PC-9 (cell line): ENCODE measurements at regions of chr15 and their contacts with region 1.

Region 1: DNA sequence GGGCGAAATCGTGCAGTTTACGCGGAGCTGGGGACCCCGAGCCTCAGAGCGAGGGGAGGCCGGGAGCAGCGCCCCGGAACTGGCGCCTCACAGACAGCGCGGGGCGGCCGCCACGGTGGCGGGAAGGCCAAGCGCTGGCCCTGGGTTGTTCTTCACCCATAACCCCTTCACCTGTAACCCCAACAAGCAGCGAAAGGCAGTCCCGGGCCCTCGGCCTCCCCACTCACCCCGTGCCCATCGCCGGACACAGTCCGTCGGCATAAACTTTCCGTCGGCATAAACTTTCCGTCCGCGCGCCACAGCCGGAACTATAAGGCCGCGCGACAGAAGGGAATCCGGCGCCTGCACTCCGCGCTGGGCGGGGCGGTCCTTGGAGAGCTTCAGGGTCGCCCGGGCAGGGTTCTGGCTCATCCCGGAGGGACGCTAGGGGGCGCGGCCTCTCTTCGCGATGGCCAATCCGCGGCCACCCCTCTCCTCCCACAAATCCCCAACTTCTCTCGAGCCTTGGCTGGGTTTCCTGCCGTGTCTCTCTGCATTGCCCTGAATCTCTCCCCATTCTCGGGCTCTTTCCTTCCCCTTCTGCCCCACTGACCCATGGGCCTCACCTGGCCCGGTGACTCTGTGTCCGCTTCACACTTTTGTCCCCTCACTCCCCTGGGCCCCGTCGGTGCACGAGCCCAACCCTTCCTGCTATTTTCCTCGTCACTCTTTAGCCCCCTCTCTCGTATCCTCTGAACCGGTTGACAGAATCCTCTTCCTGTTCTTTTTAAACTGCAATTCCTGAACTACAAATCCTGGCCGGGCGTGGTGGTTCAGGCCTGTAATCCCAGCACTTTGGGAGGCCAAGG is at the start of gene INTS14:
- DNase-seq: peak; percentile 79 to 97
- H3K4me3 ChIP-seq: peak within 1 kb of the TSS; percentile 88
- H3K27ac ChIP-seq: peak within 1 kb of the TSS; percentile 91
- H3K4me1 ChIP-seq: peaks cover 21% of the 10 kb centered on the region
- H3K27me3 ChIP-seq: no peaks in the 10 kb centered on the region
- CTCF ChIP-seq: peak; percentile 68
- total RNA-seq, gene INTS14: 46.6 and 53.7 TPM in 2 replicates

Region 2: GRCh38 chr15:63640146-63640545 is 1970.9 kb before region 1 on chr15:
- CTCF ChIA-PET with region 1: no interaction called
- POLR2A ChIA-PET with region 1: no interaction called
- intact Hi-C with region 1: no loop called
- DNase-seq: no peak
- H3K4me3 ChIP-seq: no peak overlapping the region
- H3K27ac ChIP-seq: no peak overlapping the region
- H3K4me1 ChIP-seq: no peaks in the 10 kb centered on the region
- H3K27me3 ChIP-seq: no peaks in the 10 kb centered on the region
- CTCF ChIP-seq: no peak

Region 3: DNA sequence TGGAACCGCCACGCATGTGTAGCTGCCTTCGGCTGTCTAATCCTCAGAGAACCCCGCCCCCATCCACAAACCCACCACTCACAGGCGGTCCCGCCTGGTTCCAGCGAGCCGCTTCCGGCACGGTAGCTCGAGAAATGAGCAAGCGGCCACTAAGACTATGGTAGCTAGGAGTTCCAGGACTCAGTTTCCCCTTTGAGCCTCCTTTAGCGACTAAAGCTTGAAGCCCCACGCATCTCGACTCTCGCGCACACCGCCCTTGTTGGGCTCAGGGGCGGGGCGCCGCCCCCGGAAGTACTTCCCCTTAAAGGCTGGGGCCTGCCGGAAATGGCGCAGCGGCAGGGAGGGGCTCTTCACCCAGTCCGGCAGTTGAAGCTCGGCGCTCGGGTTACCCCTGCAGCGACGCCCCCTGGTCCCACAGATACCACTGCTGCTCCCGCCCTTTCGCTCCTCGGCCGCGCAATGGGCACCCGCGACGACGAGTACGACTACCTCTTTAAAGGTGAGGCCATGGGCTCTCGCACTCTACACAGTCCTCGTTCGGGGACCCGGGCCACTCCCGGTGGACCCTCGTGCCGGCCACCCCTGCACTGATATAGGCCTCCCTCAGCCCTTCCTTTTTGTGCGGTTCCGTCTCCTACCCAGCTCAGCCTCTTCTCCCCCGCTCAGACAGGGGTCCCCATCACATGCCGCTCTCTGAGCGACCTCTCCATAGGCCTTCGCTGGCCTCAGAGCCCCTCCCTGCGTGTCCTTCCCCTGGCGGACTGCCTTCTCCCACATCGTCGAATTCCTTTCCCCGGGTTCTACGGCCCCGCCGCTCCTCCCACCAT is 258.2 kb after region 1 on chr15 and contains the start of gene RAB11A:
- CTCF ChIA-PET with region 1: no interaction called
- POLR2A ChIA-PET with region 1: interaction called, 5 read pairs
- intact Hi-C with region 1: loop called (anchors 1 kb)
- DNase-seq: peak; percentile 88 to 94
- H3K4me3 ChIP-seq: peak within 1 kb of the TSS; percentile 96
- H3K27ac ChIP-seq: peak within 1 kb of the TSS; percentile 85
- H3K4me1 ChIP-seq: peaks cover 21% of the 10 kb centered on the region; the same call in 1 of the 2 replicates
- H3K27me3 ChIP-seq: no peaks in the 10 kb centered on the region
- CTCF ChIP-seq: no peak; the same call in 1 of the 2 replicates
- total RNA-seq, gene RAB11A: 186 and 233 TPM in 2 replicates

Region 4: DNA sequence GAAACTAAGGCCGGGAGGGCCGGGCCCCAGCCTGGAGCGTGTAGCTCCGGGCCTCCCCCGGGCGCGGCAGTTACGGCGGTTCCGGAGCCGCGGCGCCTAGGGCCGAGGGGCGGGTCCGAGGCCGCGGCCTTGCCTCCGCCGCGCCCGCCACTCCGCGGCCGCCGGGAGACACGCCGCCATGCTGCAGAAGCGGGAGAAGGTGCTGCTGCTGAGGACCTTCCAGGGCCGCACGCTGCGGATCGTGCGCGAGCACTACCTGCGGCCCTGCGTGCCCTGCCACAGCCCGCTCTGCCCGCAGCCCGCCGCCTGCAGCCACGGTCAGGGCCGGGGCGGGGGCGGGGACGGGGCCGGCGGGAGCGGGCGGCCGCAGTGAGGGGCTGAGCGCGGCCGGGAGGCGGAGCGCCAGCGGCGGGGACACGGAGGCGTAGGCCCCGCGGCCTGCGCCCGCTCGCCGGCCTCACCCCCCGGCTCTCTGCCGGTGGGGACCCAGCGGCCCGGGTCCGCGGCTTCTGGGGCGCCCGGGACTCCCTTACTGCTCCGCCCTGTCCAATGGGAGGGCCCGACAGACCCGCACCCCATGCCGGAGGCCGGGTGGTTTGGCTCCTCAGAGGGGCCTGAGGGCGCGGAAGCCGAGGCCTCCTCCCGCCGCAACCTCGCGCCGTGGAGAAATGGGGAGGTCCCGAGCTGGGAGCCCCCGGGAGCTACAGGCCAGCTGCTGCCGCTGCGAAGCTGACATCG is 682.5 kb after region 1 on chr15 and contains the start of gene DIS3L:
- CTCF ChIA-PET with region 1: no interaction called
- POLR2A ChIA-PET with region 1: no interaction called
- intact Hi-C with region 1: loop called (anchors 10 kb)
- DNase-seq: peak in 1 of 2 experiments; percentile 52
- H3K4me3 ChIP-seq: peak within 1 kb of the TSS; percentile 52
- H3K27ac ChIP-seq: peak within 1 kb of the TSS; percentile 57
- H3K4me1 ChIP-seq: peaks cover 28% of the 10 kb centered on the region
- H3K27me3 ChIP-seq: no peaks in the 10 kb centered on the region
- CTCF ChIP-seq: no peak
- total RNA-seq, gene DIS3L: 27.7 and 31.2 TPM in 2 replicates